ENCODE measurements at regions of chr1 and their contacts with region 1.

Region 1: GRCh38 chr1:161132410-161133219 is at the start of gene DEDD:
- DNase-seq: peak; percentile 92 to 96 (median 92)
- ATAC-seq: peak; percentile 97
- H3K4me3 ChIP-seq: peak within 1 kb of the TSS; percentile 57
- H3K27ac ChIP-seq: peak within 1 kb of the TSS; percentile 89
- H3K4me1 ChIP-seq: peaks cover 7 to 15% of the 10 kb centered on the region in 2 experiments; a peak in 3 of 5 replicates
- H3K27me3 ChIP-seq: no peaks in the 10 kb centered on the region
- CTCF ChIP-seq: peak in 2 of 3 experiments; percentile 21 to 28; a peak in 1 of 6 replicates
- EP300 ChIP-seq: no peak
- POLR2A ChIP-seq: peak; percentile 65
- RAD21 ChIP-seq: no peak
- polyA plus RNA-seq, gene DEDD: 31.6 to 41.0 TPM

Region 2: DNA sequence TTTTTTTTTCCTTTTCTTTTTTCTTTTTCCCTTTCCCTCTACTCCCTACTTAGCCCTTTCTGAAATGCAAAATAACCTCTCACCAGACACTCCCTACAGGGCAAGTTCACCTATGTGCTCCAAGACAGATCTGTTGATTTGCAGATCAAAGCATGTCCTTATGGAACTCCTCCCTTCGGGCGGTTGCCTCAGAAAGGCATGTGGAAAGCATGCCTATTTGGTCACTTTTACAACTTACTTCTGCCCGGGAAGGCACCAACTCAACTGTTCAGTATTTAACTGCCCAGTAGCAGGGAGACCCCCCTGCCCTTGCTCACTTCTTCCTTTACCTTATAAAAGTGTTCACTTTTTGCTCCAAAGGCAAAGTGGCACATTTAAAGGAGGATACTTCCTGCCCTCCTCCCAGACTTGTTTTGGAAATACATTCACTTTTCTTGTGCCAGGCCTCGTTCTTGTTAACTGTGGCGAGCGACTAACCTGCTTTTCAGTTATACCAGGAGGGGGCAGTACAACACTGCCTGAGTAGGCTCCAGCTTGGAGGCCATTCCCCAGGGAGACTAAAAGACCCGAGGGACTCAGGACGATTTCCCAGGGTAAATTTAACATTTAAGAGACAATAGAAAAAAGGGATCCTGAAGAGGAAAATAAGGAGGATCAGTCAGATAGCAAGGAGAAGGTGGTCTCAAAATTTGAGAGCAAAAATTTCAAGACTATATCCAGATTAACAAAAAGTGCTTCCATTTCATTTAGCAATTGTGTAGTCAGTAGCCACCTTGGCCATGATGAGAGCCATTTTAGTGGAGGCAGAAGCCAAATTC is 405.9 kb before region 1 on chr1:
- CTCF ChIA-PET with region 1: no interaction called
- POLR2A ChIA-PET with region 1: no interaction called
- in situ Hi-C with region 1: no loop called
- intact Hi-C with region 1: loop called (anchors 10 kb)
- DNase-seq: peak; percentile 73 to 86 (median 77)
- ATAC-seq: peak; percentile 93
- H3K4me3 ChIP-seq: no peak overlapping the region
- H3K27ac ChIP-seq: peak overlapping the region; percentile 60
- H3K4me1 ChIP-seq: peaks cover 0 to 8% of the 10 kb centered on the region in 2 experiments; a peak in 2 of 5 replicates
- H3K27me3 ChIP-seq: no peaks in the 10 kb centered on the region; a peak in 1 of 5 replicates
- CTCF ChIP-seq: peak; percentile 85 to 92 (median 88)
- EP300 ChIP-seq: no peak
- POLR2A ChIP-seq: no peak
- RAD21 ChIP-seq: peak; percentile 91 to 96

Region 3: DNA sequence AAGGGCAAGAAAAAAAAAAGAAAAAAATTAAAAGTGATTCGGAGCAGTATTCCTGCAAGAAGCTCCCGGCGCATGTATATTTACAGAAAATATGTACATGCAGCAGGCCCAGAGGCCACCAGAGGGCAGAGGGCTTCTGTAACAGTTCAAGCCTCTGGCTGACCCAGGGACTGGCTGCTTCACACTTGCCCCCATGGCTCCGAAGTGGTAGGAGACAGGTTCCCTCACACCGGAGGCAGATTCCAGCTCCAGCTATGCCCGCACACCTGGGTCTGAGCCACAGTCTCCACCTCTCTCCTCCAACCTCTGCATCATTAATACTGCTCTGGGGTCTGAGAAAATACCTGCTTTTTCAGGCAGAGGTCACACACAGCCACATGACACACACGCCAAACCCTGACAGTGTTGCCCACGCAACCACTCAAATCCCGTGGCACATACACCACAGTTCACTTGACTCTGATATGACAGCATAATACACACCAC is 60.7 kb before region 1 on chr1:
- CTCF ChIA-PET with region 1: interaction called, 5 read pairs
- POLR2A ChIA-PET with region 1: interaction called, 4 read pairs
- in situ Hi-C with region 1: no loop called
- intact Hi-C with region 1: loop called (anchors 10 kb)
- DNase-seq: peak; percentile 77 to 80 (median 78)
- ATAC-seq: peak; percentile 90
- H3K4me3 ChIP-seq: no peak overlapping the region
- H3K27ac ChIP-seq: no peak overlapping the region
- H3K4me1 ChIP-seq: peaks cover 22 to 23% of the 10 kb centered on the region in 2 experiments
- H3K27me3 ChIP-seq: no peaks in the 10 kb centered on the region
- CTCF ChIP-seq: peak; percentile 86 to 91 (median 90)
- EP300 ChIP-seq: no peak
- POLR2A ChIP-seq: no peak
- RAD21 ChIP-seq: peak; percentile 75 to 88

Region 4: GRCh38 chr1:161117759-161118581 is 14.6 kb before region 1 on chr1 and contains the starts of genes NIT1 and PFDN2:
- CTCF ChIA-PET with region 1: no interaction called
- POLR2A ChIA-PET with region 1: interaction called, 39 read pairs
- in situ Hi-C with region 1: no loop called
- intact Hi-C with region 1: loop called (anchors 1 kb)
- DNase-seq: peak; percentile 85 to 93 (median 88)
- ATAC-seq: peak; percentile 83
- H3K4me3 ChIP-seq: peak within 1 kb of the TSS; percentile 81
- H3K27ac ChIP-seq: peak within 1 kb of the TSS; percentile 95
- H3K4me1 ChIP-seq: peaks cover 28 to 44% of the 10 kb centered on the region in 2 experiments
- H3K27me3 ChIP-seq: no peaks in the 10 kb centered on the region; a peak in 1 of 5 replicates
- CTCF ChIP-seq: 0 out of 6 replicates have a peak, but pooled peaks of 1 of the 3 experiments have one; percentile 17
- EP300 ChIP-seq: no peak
- POLR2A ChIP-seq: peak; percentile 94
- RAD21 ChIP-seq: no peak
- polyA plus RNA-seq, gene NIT1: 69.8 to 76.0 TPM
- polyA plus RNA-seq, gene PFDN2: 50.2 to 77.1 TPM

Region 5: GRCh38 chr1:161153679-161154426 is 21.2 kb after region 1 on chr1 and contains the start of gene UFC1:
- CTCF ChIA-PET with region 1: no interaction called
- POLR2A ChIA-PET with region 1: interaction called, 16 read pairs
- in situ Hi-C with region 1: no loop called
- intact Hi-C with region 1: no loop called
- DNase-seq: peak; percentile 68 to 92 (median 77)
- ATAC-seq: peak; percentile 92
- H3K4me3 ChIP-seq: peak within 1 kb of the TSS; percentile 52
- H3K27ac ChIP-seq: peak within 1 kb of the TSS; percentile 92
- H3K4me1 ChIP-seq: peaks cover 7 to 19% of the 10 kb centered on the region in 2 experiments; a peak in 4 of 5 replicates
- H3K27me3 ChIP-seq: no peaks in the 10 kb centered on the region
- CTCF ChIP-seq: no peak
- EP300 ChIP-seq: peak; percentile 7; the same call in 1 of the 2 replicates
- POLR2A ChIP-seq: peak; percentile 94
- RAD21 ChIP-seq: no peak
- polyA plus RNA-seq, gene UFC1: 213 to 220 TPM

Region 6: DNA sequence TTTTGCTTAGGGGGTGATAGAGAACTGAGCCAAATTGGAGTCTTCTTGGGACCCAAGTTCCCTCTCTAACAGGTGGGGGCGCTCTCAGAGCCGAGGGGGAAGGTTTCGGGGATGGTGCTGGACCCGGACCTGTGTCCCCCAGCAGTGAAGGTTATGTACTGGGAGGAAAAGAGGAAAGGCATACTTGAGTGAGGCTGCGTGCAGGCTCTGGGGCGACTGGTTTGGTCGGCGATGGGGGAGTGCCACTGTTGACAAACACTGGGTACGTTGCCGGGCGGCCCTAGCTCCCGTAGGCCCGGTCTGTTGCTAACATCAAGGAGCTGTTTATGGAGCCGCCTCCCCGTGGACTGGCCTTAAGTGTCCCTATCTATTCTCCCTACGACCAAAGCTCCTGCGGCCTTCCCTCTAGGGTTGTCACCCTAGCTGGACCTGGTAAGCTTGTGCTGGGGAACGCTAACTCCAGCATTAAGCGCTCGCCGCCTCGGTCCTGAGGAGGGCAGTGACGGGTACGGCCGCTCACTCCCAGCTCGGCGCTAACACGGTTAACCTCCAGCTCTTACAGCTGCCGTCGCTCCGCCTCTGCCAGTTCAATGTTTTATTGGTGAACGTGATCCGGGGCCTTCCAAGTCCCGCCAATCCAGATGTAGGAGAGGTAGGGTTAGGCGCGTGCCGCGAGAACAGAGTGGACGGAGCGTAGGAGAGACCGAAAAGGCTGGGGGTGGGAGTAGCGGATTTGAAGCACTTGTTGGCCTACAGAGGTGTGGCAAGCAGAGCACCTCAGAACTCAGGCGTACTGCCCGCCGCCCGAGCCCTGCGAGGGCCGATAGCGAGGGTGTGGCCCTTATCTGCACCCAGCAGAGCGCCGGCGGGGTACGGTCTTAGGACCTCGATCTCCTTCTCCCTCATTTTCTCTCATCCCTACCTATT is 33.4 kb after region 1 on chr1 and contains the start of gene PPOX:
- CTCF ChIA-PET with region 1: no interaction called
- POLR2A ChIA-PET with region 1: interaction called, 14 read pairs
- in situ Hi-C with region 1: no loop called
- intact Hi-C with region 1: loop called (anchors 5 kb)
- DNase-seq: peak; percentile 91 to 99 (median 93)
- ATAC-seq: peak; percentile 93
- H3K4me3 ChIP-seq: peak within 1 kb of the TSS; percentile 55
- H3K27ac ChIP-seq: peak within 1 kb of the TSS; percentile 83
- H3K4me1 ChIP-seq: peaks cover 54 to 70% of the 10 kb centered on the region in 2 experiments
- H3K27me3 ChIP-seq: no peaks in the 10 kb centered on the region
- CTCF ChIP-seq: peak; percentile 69 to 85 (median 72)
- EP300 ChIP-seq: peak; percentile 98
- POLR2A ChIP-seq: peak; percentile 96
- RAD21 ChIP-seq: peak in 1 of 2 experiments; percentile 22; a peak in 2 of 4 replicates
- polyA plus RNA-seq, gene PPOX: 17.0 to 31.1 TPM

Measured in K562 (cell line).